ENCODE measurements at regions of chr2 and their contacts with region 1.

Region 1: GRCh38 chr2:182715896-182716668 is at the start of gene DNAJC10:
- DNase-seq: peak; percentile 87
- H3K4me3 Mint-ChIP-seq: no peak within 1 kb of the TSS
- H3K27ac Mint-ChIP-seq: no peak within 1 kb of the TSS
- H3K4me1 Mint-ChIP-seq: no peaks in the 10 kb centered on the region
- H3K27me3 Mint-ChIP-seq: peaks cover 5% of the 10 kb centered on the region
- total RNA-seq, gene DNAJC10: 68.7 and 69.5 TPM in 2 replicates

Region 2: GRCh38 chr2:182666674-182667314 is 49.3 kb before region 1 on chr2:
- intact Hi-C with region 1: loop called (anchors 2 kb)
- DNase-seq: peak; percentile 10
- H3K4me3 Mint-ChIP-seq: no peak overlapping the region
- H3K27ac Mint-ChIP-seq: no peak overlapping the region
- H3K4me1 Mint-ChIP-seq: peaks cover 5% of the 10 kb centered on the region
- H3K27me3 Mint-ChIP-seq: peaks cover 5% of the 10 kb centered on the region

Region 3: DNA sequence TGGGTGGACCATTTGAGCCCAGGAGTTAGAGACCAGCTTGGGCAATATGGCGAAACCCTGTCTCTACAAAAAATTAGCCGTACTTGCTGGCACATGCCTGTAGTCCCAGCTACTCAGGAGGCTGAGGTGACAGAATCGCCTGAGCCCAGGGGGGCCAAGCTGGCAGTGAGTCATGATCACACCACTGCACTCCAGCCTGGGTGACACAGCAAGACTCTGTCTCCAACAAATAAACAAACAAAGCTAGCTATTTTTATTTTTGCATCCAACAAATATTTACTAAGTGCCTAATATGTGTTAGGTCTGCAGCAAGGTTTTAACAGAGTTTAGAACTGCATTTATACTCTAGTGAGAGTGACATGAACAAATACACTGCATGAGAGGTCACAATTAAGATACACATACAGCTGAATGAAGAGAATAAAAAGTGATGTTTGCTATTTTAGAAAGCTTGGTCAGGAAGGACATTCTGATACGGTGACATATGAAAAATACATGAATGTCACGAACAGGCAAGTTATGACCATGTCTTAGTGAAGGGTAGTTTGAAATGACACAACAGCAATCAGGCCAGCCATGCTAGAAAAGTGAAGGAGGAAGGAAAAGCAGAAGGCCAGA is 233.6 kb after region 1 on chr2:
- intact Hi-C with region 1: loop called (anchors 2 kb)
- DNase-seq: no peak
- H3K4me3 Mint-ChIP-seq: no peak overlapping the region
- H3K27ac Mint-ChIP-seq: no peak overlapping the region
- H3K4me1 Mint-ChIP-seq: peaks cover 32% of the 10 kb centered on the region
- H3K27me3 Mint-ChIP-seq: no peaks in the 10 kb centered on the region

Region 4: DNA sequence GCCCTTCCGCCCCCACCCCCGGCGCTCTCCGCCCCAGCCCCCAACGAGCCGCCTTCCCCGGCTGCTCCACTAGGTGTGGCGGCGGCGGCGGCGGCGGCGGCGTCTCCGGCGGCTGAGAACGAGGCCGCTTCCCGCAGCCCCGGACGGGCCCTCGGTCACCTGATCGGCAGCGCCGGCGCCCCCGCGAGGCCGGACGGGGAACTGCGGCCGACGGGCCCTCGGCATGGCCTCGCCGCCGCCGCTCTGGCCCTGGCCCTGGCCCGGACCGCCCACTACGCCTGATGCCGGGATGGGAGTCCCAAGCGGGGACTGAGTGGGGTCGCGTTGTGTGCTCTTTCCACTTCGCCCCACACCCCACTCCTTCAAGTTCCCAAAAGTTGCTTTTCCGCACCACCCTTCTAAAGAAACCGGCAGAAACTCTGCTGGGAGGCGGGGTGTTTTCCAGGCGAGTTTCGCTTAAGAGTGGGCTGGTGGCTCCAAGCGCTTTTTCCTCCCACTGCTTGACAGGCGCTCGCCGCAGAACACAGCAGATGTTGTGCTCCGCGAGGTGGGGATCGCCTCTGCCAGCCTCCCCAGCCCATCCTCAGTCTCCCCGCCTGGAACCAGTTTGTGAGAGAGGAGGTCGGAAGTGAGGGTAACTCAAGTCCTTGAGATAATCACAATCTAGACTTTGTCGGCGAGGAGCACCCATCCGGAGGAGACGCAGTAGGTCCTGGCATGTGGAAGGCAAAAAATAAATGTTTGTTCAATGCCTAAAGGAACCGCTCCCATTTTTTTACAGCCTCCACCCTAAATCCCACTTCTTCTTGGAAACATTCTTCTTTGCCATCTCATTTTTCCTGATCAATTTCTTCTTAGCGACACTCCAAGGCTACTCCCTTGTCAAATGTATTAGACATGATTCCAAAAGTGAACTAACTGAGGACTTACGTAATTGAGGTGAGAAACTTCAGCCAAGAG is 322.5 kb after region 1 on chr2 and contains the start of gene NCKAP1:
- intact Hi-C with region 1: loop called (anchors 1 kb)
- DNase-seq: peak; percentile 82
- H3K4me3 Mint-ChIP-seq: peak within 1 kb of the TSS; percentile 83
- H3K27ac Mint-ChIP-seq: peak within 1 kb of the TSS; percentile 69
- H3K4me1 Mint-ChIP-seq: peaks cover 28% of the 10 kb centered on the region
- H3K27me3 Mint-ChIP-seq: peaks cover 78% of the 10 kb centered on the region
- total RNA-seq, gene NCKAP1: 14.4 and 16.4 TPM in 2 replicates

Region 5: GRCh38 chr2:183078465-183079138 is 362.5 kb after region 1 on chr2 and contains the start of gene DUSP19:
- intact Hi-C with region 1: loop called (anchors 5 kb)
- DNase-seq: peak; percentile 78
- H3K4me3 Mint-ChIP-seq: peak within 1 kb of the TSS; percentile 91
- H3K27ac Mint-ChIP-seq: peak within 1 kb of the TSS; percentile 41
- H3K4me1 Mint-ChIP-seq: peaks cover 15% of the 10 kb centered on the region
- H3K27me3 Mint-ChIP-seq: peaks cover 7% of the 10 kb centered on the region
- total RNA-seq, gene DUSP19: 1.0 and 1.7 TPM in 2 replicates

Region 6: GRCh38 chr2:183124222-183124956 is 408.3 kb after region 1 on chr2 and contains the start of gene NUP35:
- intact Hi-C with region 1: loop called (anchors 1 kb)
- DNase-seq: peak; percentile 78
- H3K4me3 Mint-ChIP-seq: peak within 1 kb of the TSS; percentile 96
- H3K27ac Mint-ChIP-seq: peak within 1 kb of the TSS; percentile 98
- H3K4me1 Mint-ChIP-seq: peaks cover 29% of the 10 kb centered on the region
- H3K27me3 Mint-ChIP-seq: peaks cover 8% of the 10 kb centered on the region
- total RNA-seq, gene NUP35: 40.6 and 41.9 TPM in 2 replicates

Measured in activated T-helper 1 cell treated with anti-CD3 and anti-CD28 coated beads, Interleukin-12 subunit alpha, Interleukin-12 subunit beta, Interleukin-2, Interleukin-4 antibody, amounts not matched to agents 30 ng/mL and 10 ng/mL and 1 ng/mL, durations not matched to agents 14 hours and 24 hours and 36 hours (primary cell).